Endothelial cell of umbilical vein (primary cell): ENCODE measurements at regions of chr7 and their contacts with region 1.

Region 1: DNA sequence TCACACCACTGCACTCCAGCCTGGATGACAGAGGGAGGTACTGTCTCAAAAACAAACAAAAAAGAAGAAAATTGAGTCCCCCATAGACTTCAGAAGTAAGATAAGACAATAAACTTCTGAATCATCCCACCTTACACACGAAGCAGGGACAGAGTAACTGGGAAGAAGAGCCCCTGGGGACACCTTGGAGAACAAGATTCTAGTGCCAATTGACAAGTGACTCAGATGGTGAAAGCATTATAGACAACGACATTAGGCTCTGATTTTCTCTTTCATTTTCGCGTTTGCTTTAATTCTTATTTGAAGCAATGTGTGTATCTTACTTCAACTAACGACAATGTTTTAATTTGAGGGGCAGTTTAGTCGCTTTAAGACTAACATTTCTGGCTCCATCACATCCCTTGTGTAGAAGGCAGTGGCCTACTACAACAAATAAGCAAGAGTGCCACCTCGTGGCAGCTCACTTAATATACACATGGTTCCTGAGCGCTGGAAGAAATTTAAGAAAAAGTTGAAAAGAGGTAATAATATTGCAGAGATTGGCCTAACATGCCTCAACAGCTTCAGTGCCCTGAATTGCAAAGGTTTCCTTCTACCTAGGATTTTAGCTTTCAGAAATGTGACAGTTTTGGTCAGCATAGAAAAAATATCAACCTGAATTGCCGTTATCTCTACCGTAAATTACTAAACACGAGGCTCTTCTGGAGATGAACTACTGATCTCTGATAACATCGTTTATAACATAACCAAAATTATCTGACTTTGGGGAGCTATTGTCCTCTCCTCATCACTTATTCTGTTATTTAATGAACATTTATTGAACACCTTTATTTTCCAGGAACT is 36.7 kb downstream of the ASNS start:
- DNase-seq: peak; percentile 66
- H3K4me3 ChIP-seq: no peak overlapping the region
- H3K27ac ChIP-seq: no peak overlapping the region
- H3K4me1 ChIP-seq: no peaks in the 10 kb centered on the region
- H3K27me3 ChIP-seq: peaks cover 1 to 8% of the 10 kb centered on the region in 2 experiments
- CTCF ChIP-seq: peak; percentile 53 to 58
- POLR2A ChIP-seq: no peak

Region 2: DNA sequence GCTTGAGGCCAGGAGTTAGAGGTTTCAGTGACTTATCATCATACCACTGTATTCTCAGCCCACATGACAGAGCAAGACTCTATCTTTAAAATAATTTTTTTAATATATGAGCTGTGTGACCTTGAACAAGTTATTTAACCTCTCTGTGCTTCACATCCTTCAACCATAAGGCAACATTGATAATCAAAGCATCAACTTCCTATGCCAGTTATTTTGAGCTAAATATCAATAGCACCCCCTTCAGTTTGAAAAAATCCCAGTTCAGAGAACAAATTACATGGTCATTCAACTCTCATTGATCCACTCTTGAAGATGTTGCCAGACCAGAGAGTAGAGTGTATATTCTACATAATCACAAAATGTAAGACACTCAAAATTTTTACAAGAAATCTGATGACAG is 16.4 kb before region 1 on chr7:
- CTCF ChIA-PET with region 1: interaction called, 11 read pairs
- POLR2A ChIA-PET with region 1: no interaction called
- dilution Hi-C with region 1: no loop called
- intact Hi-C with region 1: no loop called
- DNase-seq: no peak
- H3K4me3 ChIP-seq: no peak overlapping the region
- H3K27ac ChIP-seq: no peak overlapping the region
- H3K4me1 ChIP-seq: no peaks in the 10 kb centered on the region
- H3K27me3 ChIP-seq: no peaks in the 10 kb centered on the region
- CTCF ChIP-seq: no peak
- POLR2A ChIP-seq: no peak

Region 3: GRCh38 chr7:97845622-97846203 is 10.2 kb after region 1 on chr7:
- CTCF ChIA-PET with region 1: interaction called, 19 read pairs
- POLR2A ChIA-PET with region 1: no interaction called
- dilution Hi-C with region 1: no loop called
- intact Hi-C with region 1: no loop called
- DNase-seq: peak; percentile 36
- H3K4me3 ChIP-seq: no peak overlapping the region
- H3K27ac ChIP-seq: no peak overlapping the region
- H3K4me1 ChIP-seq: no peaks in the 10 kb centered on the region
- H3K27me3 ChIP-seq: no peaks in the 10 kb centered on the region
- CTCF ChIP-seq: peak in 1 of 2 donors; percentile 20
- POLR2A ChIP-seq: no peak

Region 4: DNA sequence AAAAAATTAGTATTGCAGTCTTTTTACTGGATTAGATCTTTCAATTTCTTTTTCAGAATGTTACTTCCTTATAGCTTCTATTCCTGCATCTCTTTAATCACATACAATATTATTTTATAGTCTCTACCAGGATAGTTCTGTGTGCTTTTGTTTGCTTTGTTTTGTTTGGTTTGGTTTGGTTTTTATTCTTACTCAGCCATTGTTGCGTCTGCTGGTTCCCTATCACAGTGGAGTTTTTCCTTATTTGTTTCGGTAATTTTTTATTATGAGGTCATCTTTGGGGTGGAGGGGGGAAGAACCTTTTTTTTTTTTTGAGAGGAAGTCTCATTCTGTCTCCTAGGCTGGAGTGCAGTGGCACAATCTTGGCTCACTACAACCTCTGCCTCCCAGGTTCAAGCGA is 574.3 kb after region 1 on chr7:
- CTCF ChIA-PET with region 1: no interaction called
- POLR2A ChIA-PET with region 1: no interaction called
- dilution Hi-C with region 1: no loop called
- intact Hi-C with region 1: no loop called
- DNase-seq: no peak
- H3K4me3 ChIP-seq: no peak overlapping the region
- H3K27ac ChIP-seq: no peak overlapping the region
- H3K4me1 ChIP-seq: no peaks in the 10 kb centered on the region
- H3K27me3 ChIP-seq: no peaks in the 10 kb centered on the region
- CTCF ChIP-seq: no peak
- POLR2A ChIP-seq: no peak